Activated CD4-positive, alpha-beta memory T cell treated with anti-CD3 and anti-CD28 coated beads for 36 hours (primary cell): ENCODE measurements at regions of chr4 and their contacts with region 1.

Region 1: GRCh38 chr4:498328-498904 is 540 bp downstream of the ZNF721 start:
- DNase-seq: no peak
- H3K4me3 Mint-ChIP-seq: peak overlapping the region; percentile 95
- H3K27ac Mint-ChIP-seq: peak overlapping the region; percentile 91
- H3K4me1 Mint-ChIP-seq: peaks cover 41% of the 10 kb centered on the region
- H3K27me3 Mint-ChIP-seq: no peaks in the 10 kb centered on the region

Region 2: GRCh38 chr4:473570-474457 is 24.6 kb before region 1 on chr4:
- CTCF ChIA-PET with region 1: no interaction called
- POLR2A ChIA-PET with region 1: interaction called, 10 read pairs
- intact Hi-C with region 1: loop called (anchors 1 kb)
- DNase-seq: peak; percentile 96
- H3K4me3 Mint-ChIP-seq: peak overlapping the region; percentile 99
- H3K27ac Mint-ChIP-seq: peak overlapping the region; percentile 100
- H3K4me1 Mint-ChIP-seq: peaks cover 32% of the 10 kb centered on the region
- H3K27me3 Mint-ChIP-seq: no peaks in the 10 kb centered on the region

Region 3: GRCh38 chr4:548976-549375 is 50.6 kb after region 1 on chr4:
- CTCF ChIA-PET with region 1: no interaction called
- POLR2A ChIA-PET with region 1: no interaction called
- intact Hi-C with region 1: no loop called
- DNase-seq: no peak
- H3K4me3 Mint-ChIP-seq: no peak overlapping the region
- H3K27ac Mint-ChIP-seq: no peak overlapping the region
- H3K4me1 Mint-ChIP-seq: no peaks in the 10 kb centered on the region
- H3K27me3 Mint-ChIP-seq: peaks cover 1% of the 10 kb centered on the region